Posterior cingulate gyrus (tissue), 11 donors: ENCODE measurements at regions of chr2 and their contacts with region 1.

Region 1: DNA sequence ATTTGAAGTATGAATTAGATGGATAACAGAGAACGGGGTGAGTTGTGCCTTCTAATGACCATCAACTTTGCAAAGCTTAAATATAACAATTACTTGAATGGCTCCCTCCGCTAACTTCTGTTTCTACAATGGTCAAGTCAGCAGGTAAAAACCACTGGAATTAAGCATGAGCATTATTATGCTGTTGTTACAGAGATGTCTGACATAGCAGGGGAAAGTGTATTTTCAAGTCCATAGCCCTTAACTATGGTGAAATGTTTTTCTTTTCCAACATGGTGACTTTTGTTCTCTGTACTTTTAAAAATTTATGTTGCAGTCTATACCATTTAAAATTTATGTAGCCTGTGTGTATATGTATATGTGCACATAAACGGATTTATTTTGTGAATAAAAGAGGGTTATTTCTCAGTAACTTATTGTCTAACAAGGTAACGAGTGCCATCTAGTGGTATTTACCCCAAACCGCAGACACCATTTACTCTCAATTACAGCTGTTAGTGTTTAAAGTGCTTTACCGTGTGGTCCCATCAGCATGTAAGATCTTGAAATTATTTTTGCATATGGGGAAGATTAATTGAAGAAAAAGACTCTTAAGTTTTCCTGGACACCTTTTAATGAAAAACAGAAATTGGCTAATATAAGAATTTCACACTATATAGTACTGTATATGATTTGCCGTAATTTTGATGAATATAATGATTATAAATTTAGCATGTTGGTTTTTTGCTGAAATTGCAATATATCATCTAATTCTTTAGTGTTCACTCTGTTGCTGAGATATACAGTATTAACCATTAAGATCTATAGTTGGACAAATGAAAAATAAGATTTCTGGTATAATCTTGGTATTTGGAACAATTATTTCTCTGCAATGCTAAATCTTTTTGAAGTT is 78.2 kb downstream of the UBE2E3 start:
- DNase-seq: peak in 1 of 10 donors; percentile 11

Region 2: GRCh38 chr2:180991820-180992219 is 66.8 kb before region 1 on chr2:
- intact Hi-C with region 1: loop called (anchors 5 kb)
- DNase-seq: no peak

Region 3: DNA sequence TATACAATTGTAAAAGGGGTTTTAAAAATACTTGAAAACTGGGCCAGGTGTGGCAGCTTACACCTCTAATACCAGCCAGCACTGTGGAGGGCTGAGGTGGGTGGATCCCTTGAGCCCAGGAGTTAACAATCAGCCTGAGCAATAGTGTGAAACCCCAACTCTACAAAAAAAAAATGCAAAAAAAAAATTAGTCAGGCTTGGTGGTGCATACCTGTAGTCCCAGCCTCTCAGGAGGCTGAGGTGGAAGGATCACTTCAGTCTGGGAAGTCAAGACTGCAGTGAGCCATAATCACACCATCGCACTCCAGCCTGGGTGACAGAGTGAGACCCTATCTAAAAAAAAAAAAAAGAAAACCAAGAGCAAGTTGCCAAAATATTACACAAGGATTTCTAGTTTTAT is 104.5 kb after region 1 on chr2:
- intact Hi-C with region 1: no loop called
- DNase-seq: no peak